Dorsolateral prefrontal cortex (tissue), 120 donors: ENCODE measurements at regions of chr2 and their contacts with region 1.

Region 1: GRCh38 chr2:207166039-207166348 is 246 bp upstream of the KLF7 start:
- DNase-seq: peak; percentile 99 to 100 (median 100)
- H3K4me3 ChIP-seq: peak overlapping the region; percentile 71 to 98 (median 89)
- H3K27ac ChIP-seq: peak overlapping the region; percentile 99 to 100 (median 100)
- H3K27me3 ChIP-seq: no peaks in the 10 kb centered on the region
- CTCF ChIP-seq: no peak

Region 2: GRCh38 chr2:206800506-206801417 is 365.2 kb before region 1 on chr2:
- intact Hi-C with region 1: loop called (anchors 5 to 10 kb)
- DNase-seq: peak; percentile 42 to 86 (median 72)
- H3K4me3 ChIP-seq: peak overlapping the region in 33 of 59 donors; percentile 4 to 50 (median 28)
- H3K27ac ChIP-seq: peak overlapping the region in 20 of 59 donors; percentile 3 to 66 (median 43)
- H3K27me3 ChIP-seq: no peaks in the 10 kb centered on the region
- CTCF ChIP-seq: peak; percentile 63 to 90 (median 76)

Region 3: GRCh38 chr2:207046724-207047123 is 119.3 kb before region 1 on chr2:
- intact Hi-C with region 1: loop called (anchors 2 to 10 kb)
- DNase-seq: peak in 2 of 10 donors; percentile 15 to 35
- H3K4me3 ChIP-seq: peak overlapping the region in 2 of 59 donors; percentile 11 to 13
- H3K27ac ChIP-seq: peak overlapping the region in 31 of 59 donors; percentile 3 to 65 (median 49)
- H3K27me3 ChIP-seq: no peaks in the 10 kb centered on the region
- CTCF ChIP-seq: peak in 48 of 56 donors; percentile 12 to 73 (median 42)

Region 4: GRCh38 chr2:207113414-207113813 is 52.6 kb before region 1 on chr2:
- intact Hi-C with region 1: loop called in 1 of 2 experiments (anchors 2 kb)
- DNase-seq: peak in 9 of 10 donors; percentile 30 to 77 (median 60)
- H3K4me3 ChIP-seq: peak overlapping the region in 7 of 59 donors; percentile 2 to 31 (median 16)
- H3K27ac ChIP-seq: peak overlapping the region; percentile 59 to 96 (median 88)
- H3K27me3 ChIP-seq: no peaks in the 10 kb centered on the region
- CTCF ChIP-seq: peak in 1 of 56 donors; percentile 18

Region 5: DNA sequence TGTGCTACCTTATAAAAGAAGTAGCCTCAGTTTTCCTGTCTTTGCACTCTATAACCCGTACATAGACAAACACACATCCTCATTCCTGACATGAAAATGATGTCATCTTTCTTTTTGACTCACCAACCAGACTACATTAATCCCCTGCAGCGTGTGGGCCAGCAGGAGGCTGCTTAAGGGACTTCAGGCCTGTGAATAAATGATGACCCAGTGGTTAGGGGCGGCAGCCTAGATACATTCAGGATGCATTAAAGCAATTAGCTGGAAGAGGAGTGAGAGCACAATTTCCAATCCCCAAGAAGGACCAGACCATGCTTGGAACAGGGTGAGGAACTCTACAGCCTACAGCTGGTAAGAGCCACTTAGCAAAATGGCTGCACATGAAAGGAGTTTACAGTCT is 57.1 kb after region 1 on chr2:
- intact Hi-C with region 1: loop called (anchors 2 kb)
- DNase-seq: no peak
- H3K4me3 ChIP-seq: no peak overlapping the region
- H3K27ac ChIP-seq: no peak overlapping the region
- H3K27me3 ChIP-seq: no peaks in the 10 kb centered on the region
- CTCF ChIP-seq: no peak

Region 6: DNA sequence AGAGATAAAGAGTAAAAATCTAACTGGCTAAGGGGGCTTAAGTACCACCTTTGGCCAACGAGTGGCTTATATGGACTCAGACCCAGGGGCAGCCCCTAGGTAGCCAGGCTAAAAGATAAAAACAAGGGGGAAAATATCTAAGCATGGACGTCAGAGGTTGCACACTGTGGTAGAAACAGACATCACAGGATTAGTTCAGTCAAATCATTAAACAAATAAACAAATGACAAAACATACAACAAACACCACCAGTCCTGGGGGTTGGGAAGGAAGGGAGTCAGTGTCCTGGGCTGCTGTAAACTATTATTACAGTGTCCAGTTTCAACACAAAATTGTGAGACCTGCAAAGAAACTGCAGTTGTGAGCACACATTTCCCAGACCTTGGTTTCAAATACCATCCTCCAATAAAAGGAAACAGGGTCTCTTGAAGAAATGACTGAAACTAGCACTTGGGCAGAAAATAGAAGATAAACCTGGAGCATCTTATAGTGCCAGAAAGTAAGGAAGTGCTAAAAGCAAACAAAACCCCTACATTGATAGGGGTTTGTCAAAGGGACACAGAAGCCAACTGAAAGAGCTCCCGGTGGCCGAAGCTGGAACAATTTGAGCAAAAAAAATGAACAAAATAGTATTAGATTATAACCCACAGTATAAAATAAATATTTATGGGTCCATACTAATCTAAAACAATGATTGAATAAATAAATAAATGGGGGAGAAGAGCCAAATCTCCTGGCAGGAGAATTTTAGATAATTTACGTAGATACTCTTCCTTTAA is 154.6 kb after region 1 on chr2:
- intact Hi-C with region 1: no loop called
- DNase-seq: no peak
- H3K4me3 ChIP-seq: no peak overlapping the region
- H3K27ac ChIP-seq: no peak overlapping the region
- H3K27me3 ChIP-seq: no peaks in the 10 kb centered on the region
- CTCF ChIP-seq: no peak

Region 7: GRCh38 chr2:207334624-207335371 is 168.8 kb after region 1 on chr2:
- intact Hi-C with region 1: loop called in 1 of 2 experiments (anchors 10 kb)
- DNase-seq: peak in 3 of 10 donors; percentile 21 to 62 (median 43)
- H3K4me3 ChIP-seq: peak overlapping the region in 51 of 59 donors; percentile 4 to 56 (median 34)
- H3K27ac ChIP-seq: peak overlapping the region in 39 of 59 donors; percentile 6 to 81 (median 49)
- H3K27me3 ChIP-seq: no peaks in the 10 kb centered on the region
- CTCF ChIP-seq: peak in 1 of 56 donors; percentile 11

Region 8: GRCh38 chr2:207529330-207530159 is 363.6 kb after region 1 on chr2 and contains the start of gene CREB1:
- intact Hi-C with region 1: loop called in 1 of 2 experiments (anchors 2 kb)
- DNase-seq: peak; percentile 94 to 99 (median 98)
- H3K4me3 ChIP-seq: peak within 1 kb of the TSS; percentile 65 to 98 (median 84)
- H3K27ac ChIP-seq: peak within 1 kb of the TSS; percentile 87 to 99 (median 97)
- H3K27me3 ChIP-seq: no peaks in the 10 kb centered on the region
- CTCF ChIP-seq: peak in 41 of 56 donors; percentile 14 to 64 (median 40)
- total RNA-seq, gene CREB1: 52.8 to 106 (median 74.6) TPM